ENCODE measurements at regions of chr10 and their contacts with region 1.

Region 1: DNA sequence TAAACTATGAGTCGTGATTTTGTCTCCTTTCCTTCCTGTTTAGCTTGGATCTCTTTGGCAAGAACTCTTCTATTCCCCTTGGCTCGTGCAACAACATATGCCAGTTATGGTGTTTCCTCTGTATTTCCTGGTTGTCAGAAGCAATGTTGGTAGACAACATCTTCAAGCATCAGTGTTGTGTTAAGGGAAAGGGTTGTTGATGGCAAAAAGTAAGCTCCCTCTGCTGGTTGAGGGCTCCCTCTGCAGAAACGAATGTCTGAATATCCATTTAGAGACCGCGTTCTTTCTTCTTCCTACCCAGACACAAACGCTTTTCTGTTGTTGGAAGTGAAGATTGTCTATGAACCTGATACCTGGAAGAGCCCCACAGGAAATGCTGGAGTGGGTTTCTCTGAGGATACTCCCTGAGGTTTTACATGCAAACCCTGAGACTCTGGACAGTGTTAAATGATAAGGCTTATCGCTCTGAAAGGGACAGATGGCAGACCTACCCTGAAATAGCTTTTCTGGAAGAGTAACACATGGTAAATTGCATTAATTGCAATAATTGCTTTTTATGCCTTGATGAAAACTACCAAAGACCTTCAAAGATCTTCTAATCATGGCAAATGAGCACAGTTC is 23.5 kb upstream of the C1QL3 start:
- DNase-seq: peak in 1 of 2 experiments; percentile 45
- H3K4me3 ChIP-seq: no peak overlapping the region
- H3K4me3 Mint-ChIP-seq: no peak overlapping the region
- H3K27ac Mint-ChIP-seq: no peak overlapping the region
- H3K4me1 ChIP-seq: no peaks in the 10 kb centered on the region
- H3K4me1 Mint-ChIP-seq: no peaks in the 10 kb centered on the region
- H3K27me3 ChIP-seq: no peaks in the 10 kb centered on the region
- H3K27me3 Mint-ChIP-seq: peaks cover 8% of the 10 kb centered on the region
- CTCF ChIP-seq: peak; percentile 56 to 87

Region 2: GRCh38 chr10:15879058-15879457 is 666.2 kb before region 1 on chr10:
- CTCF ChIA-PET with region 1: no interaction called
- POLR2A ChIA-PET with region 1: no interaction called
- intact Hi-C with region 1: loop called (anchors 1 kb)
- DNase-seq: peak in 1 of 2 experiments; percentile 36
- H3K4me3 ChIP-seq: no peak overlapping the region
- H3K4me3 Mint-ChIP-seq: no peak overlapping the region
- H3K27ac Mint-ChIP-seq: no peak overlapping the region
- H3K4me1 ChIP-seq: no peaks in the 10 kb centered on the region
- H3K4me1 Mint-ChIP-seq: no peaks in the 10 kb centered on the region
- H3K27me3 ChIP-seq: no peaks in the 10 kb centered on the region
- H3K27me3 Mint-ChIP-seq: peaks cover 20% of the 10 kb centered on the region
- CTCF ChIP-seq: peak; percentile 64 to 74

Region 3: GRCh38 chr10:15898046-15898445 is 647.2 kb before region 1 on chr10:
- CTCF ChIA-PET with region 1: no interaction called
- POLR2A ChIA-PET with region 1: no interaction called
- intact Hi-C with region 1: loop called (anchors 1 kb)
- DNase-seq: peak in 1 of 2 experiments; percentile 13
- H3K4me3 ChIP-seq: no peak overlapping the region
- H3K4me3 Mint-ChIP-seq: no peak overlapping the region
- H3K27ac Mint-ChIP-seq: no peak overlapping the region
- H3K4me1 ChIP-seq: no peaks in the 10 kb centered on the region
- H3K4me1 Mint-ChIP-seq: peaks cover 7% of the 10 kb centered on the region
- H3K27me3 ChIP-seq: peaks cover 3% of the 10 kb centered on the region; the same call in 1 of the 2 replicates
- H3K27me3 Mint-ChIP-seq: peaks cover 12% of the 10 kb centered on the region
- CTCF ChIP-seq: peak; percentile 34 to 41

Region 4: GRCh38 chr10:16116404-16117304 is 428.6 kb before region 1 on chr10:
- CTCF ChIA-PET with region 1: no interaction called
- POLR2A ChIA-PET with region 1: no interaction called
- intact Hi-C with region 1: loop called (anchors 10 kb)
- DNase-seq: peak in 1 of 2 experiments; percentile 47
- H3K4me3 ChIP-seq: no peak overlapping the region
- H3K4me3 Mint-ChIP-seq: no peak overlapping the region
- H3K27ac Mint-ChIP-seq: no peak overlapping the region
- H3K4me1 ChIP-seq: no peaks in the 10 kb centered on the region
- H3K4me1 Mint-ChIP-seq: no peaks in the 10 kb centered on the region
- H3K27me3 ChIP-seq: no peaks in the 10 kb centered on the region
- H3K27me3 Mint-ChIP-seq: peaks cover 15% of the 10 kb centered on the region
- CTCF ChIP-seq: peak; percentile 75 to 80

Region 5: GRCh38 chr10:16314259-16314658 is 231.0 kb before region 1 on chr10:
- CTCF ChIA-PET with region 1: no interaction called
- POLR2A ChIA-PET with region 1: no interaction called
- intact Hi-C with region 1: loop called (anchors 1 kb)
- DNase-seq: peak; percentile 29 to 43
- H3K4me3 ChIP-seq: no peak overlapping the region
- H3K4me3 Mint-ChIP-seq: no peak overlapping the region
- H3K27ac Mint-ChIP-seq: no peak overlapping the region
- H3K4me1 ChIP-seq: no peaks in the 10 kb centered on the region
- H3K4me1 Mint-ChIP-seq: no peaks in the 10 kb centered on the region
- H3K27me3 ChIP-seq: no peaks in the 10 kb centered on the region
- H3K27me3 Mint-ChIP-seq: no peaks in the 10 kb centered on the region
- CTCF ChIP-seq: peak; percentile 15 to 50

Region 6: DNA sequence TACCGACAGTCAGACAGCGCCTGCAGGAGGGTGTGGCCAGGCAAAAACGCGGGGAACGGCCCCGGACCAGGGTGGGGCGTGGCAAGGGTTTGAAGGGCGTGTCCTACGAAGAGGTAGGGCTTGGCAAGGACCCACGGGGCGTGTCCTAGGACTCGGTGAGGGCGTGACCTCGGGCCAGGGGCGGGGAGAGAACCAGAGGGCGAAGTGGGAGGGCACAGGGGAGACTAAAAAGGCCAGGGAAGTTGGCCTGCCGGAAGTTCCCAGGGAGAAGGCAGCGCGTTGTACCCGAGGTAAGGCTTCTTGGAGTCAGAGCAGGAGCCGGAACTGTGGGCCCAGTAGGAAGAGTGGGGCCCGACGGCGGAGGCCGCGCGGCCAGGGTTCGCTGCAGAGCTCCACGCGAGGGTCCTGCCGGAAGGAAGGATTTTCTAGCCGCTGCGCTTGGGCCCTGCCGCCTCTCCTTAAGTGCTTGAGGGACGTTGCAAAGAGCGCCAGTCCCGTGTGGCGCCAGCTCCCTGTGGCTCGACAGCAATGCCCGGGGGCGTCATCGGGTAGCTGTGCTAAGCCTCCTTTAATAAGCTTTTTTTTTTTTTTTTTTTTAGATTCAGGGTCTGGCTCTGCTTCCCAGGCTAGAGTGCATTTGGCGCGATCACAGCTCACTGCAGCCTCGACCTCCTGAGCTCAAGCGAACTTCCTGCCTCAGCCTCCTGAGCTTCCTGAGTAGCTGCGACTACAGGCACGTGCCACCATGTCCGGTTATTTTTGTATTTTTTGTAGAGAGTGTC is 108.3 kb before region 1 on chr10 and contains the start of gene PTER:
- CTCF ChIA-PET with region 1: no interaction called
- POLR2A ChIA-PET with region 1: no interaction called
- intact Hi-C with region 1: loop called (anchors 5 kb)
- DNase-seq: peak; percentile 100
- H3K4me3 ChIP-seq: peak within 1 kb of the TSS; percentile 58
- H3K4me3 Mint-ChIP-seq: peak within 1 kb of the TSS; percentile 86
- H3K27ac Mint-ChIP-seq: peak within 1 kb of the TSS; percentile 85
- H3K4me1 ChIP-seq: peaks cover 7% of the 10 kb centered on the region
- H3K4me1 Mint-ChIP-seq: peaks cover 6% of the 10 kb centered on the region
- H3K27me3 ChIP-seq: no peaks in the 10 kb centered on the region
- H3K27me3 Mint-ChIP-seq: peaks cover 6% of the 10 kb centered on the region
- CTCF ChIP-seq: no peak
- total RNA-seq, gene PTER: 25.8 and 27.4 TPM in 2 replicates

Region 7: GRCh38 chr10:16832351-16833080 is 287.3 kb after region 1 on chr10:
- CTCF ChIA-PET with region 1: no interaction called
- POLR2A ChIA-PET with region 1: no interaction called
- intact Hi-C with region 1: no loop called
- DNase-seq: no peak
- H3K4me3 ChIP-seq: no peak overlapping the region
- H3K4me3 Mint-ChIP-seq: no peak overlapping the region
- H3K27ac Mint-ChIP-seq: no peak overlapping the region
- H3K4me1 ChIP-seq: no peaks in the 10 kb centered on the region
- H3K4me1 Mint-ChIP-seq: no peaks in the 10 kb centered on the region
- H3K27me3 ChIP-seq: no peaks in the 10 kb centered on the region
- H3K27me3 Mint-ChIP-seq: peaks cover 12% of the 10 kb centered on the region
- CTCF ChIP-seq: no peak

Measured in Caco-2 (cell line).